CD8-positive, alpha-beta T cell (primary cell): ENCODE measurements at regions of chr21 and their contacts with region 1.

Region 1: GRCh38 chr21:28568692-28569091 is 424.0 kb downstream of the LTN1 start:
- DNase-seq: no peak
- ATAC-seq: no peak
- H3K4me3 ChIP-seq: no peak overlapping the region
- H3K4me3 Mint-ChIP-seq: no peak overlapping the region
- H3K27ac ChIP-seq: no peak overlapping the region
- H3K27ac Mint-ChIP-seq: no peak overlapping the region
- H3K4me1 ChIP-seq: no peaks in the 10 kb centered on the region
- H3K4me1 Mint-ChIP-seq: no peaks in the 10 kb centered on the region
- H3K27me3 ChIP-seq: no peaks in the 10 kb centered on the region
- H3K27me3 Mint-ChIP-seq: no peaks in the 10 kb centered on the region
- CTCF ChIP-seq: no peak

Region 2: GRCh38 chr21:28532446-28532845 is 36.2 kb before region 1 on chr21:
- CTCF ChIA-PET with region 1: no interaction called
- POLR2A ChIA-PET with region 1: no interaction called
- intact Hi-C with region 1: loop called in 1 of 2 experiments (anchors 5 kb)
- DNase-seq: no peak
- ATAC-seq: no peak
- H3K4me3 ChIP-seq: no peak overlapping the region
- H3K4me3 Mint-ChIP-seq: no peak overlapping the region
- H3K27ac ChIP-seq: no peak overlapping the region
- H3K27ac Mint-ChIP-seq: no peak overlapping the region
- H3K4me1 ChIP-seq: no peaks in the 10 kb centered on the region
- H3K4me1 Mint-ChIP-seq: no peaks in the 10 kb centered on the region
- H3K27me3 ChIP-seq: peaks cover 0 to 3% of the 10 kb centered on the region in 2 experiments
- H3K27me3 Mint-ChIP-seq: peaks cover 5% of the 10 kb centered on the region
- CTCF ChIP-seq: no peak

Region 3: DNA sequence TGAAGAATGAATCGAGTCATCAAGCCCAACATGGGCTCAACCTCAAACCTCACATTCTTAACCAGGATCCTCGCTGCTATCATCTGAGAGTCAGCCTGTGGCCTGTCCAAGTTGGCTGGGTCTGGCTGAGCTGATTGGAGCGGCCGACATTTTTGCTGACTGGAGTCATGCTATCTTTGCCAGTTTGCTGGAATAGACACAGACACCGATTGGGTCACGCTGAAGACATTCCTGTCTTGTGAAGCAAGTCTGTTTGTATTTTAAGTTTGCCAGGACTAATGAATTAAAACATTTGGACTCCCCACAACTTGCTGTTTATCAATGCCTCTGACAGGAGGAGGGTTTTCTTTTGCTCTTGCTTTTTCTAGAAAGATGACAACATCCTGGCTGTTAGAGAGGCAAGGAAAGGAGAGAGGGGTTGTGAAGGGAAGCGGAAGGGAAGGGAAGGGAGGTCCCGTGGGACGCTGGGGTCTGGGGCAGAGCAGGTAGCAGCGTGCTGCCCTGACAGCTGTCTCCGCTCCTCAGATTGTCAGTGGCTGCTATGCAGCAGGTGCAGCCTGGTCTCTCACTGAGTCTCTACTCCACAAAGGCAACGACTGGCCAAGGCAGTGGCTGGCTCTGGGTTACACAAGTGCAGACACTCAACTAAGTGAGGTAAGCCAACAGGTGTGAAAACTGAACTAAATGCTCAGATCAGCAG is 561.7 kb after region 1 on chr21 and contains the start of gene MAP3K7CL:
- CTCF ChIA-PET with region 1: no interaction called
- POLR2A ChIA-PET with region 1: no interaction called
- intact Hi-C with region 1: no loop called
- DNase-seq: no peak
- ATAC-seq: no peak
- H3K4me3 ChIP-seq: no peak within 1 kb of the TSS
- H3K4me3 Mint-ChIP-seq: no peak within 1 kb of the TSS
- H3K27ac ChIP-seq: no peak within 1 kb of the TSS
- H3K27ac Mint-ChIP-seq: no peak within 1 kb of the TSS
- H3K4me1 ChIP-seq: no peaks in the 10 kb centered on the region
- H3K4me1 Mint-ChIP-seq: no peaks in the 10 kb centered on the region
- H3K27me3 ChIP-seq: no peaks in the 10 kb centered on the region
- H3K27me3 Mint-ChIP-seq: no peaks in the 10 kb centered on the region
- CTCF ChIP-seq: no peak
- total RNA-seq, gene MAP3K7CL: 2.3 to 2.9 TPM